Left ventricle myocardium superior (tissue), 1 donor: ENCODE measurements at regions of chr13 and their contacts with region 1.

Region 1: GRCh38 chr13:76383676-76384461 is 502.3 kb downstream of the KCTD12 start:
- DNase-seq: no peak
- ATAC-seq: peak; percentile 85

Region 2: GRCh38 chr13:76210262-76210661 is 173.6 kb before region 1 on chr13:
- intact Hi-C with region 1: loop called (anchors 5 kb)
- DNase-seq: peak; percentile 56
- ATAC-seq: peak; percentile 58

Region 3: DNA sequence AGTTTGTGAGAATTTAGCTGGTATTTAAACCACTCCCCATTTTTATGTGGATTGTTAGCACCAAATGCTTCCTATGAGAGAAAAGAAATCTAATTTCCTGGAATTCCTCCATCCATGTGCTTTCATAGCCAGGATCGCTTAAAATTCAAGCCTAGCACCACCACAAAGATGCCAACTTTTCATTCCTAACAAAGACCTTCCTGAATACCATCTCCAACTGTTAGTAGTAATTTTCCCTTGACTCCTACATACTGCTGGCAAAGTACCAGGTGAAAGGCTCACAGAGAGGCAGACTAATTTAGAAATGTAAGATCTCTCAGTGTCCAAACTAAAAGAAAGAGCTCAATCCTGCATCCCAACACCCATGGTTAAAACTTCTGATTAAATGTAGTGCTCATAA is 116.0 kb after region 1 on chr13:
- intact Hi-C with region 1: no loop called
- DNase-seq: no peak
- ATAC-seq: no peak

Region 4: DNA sequence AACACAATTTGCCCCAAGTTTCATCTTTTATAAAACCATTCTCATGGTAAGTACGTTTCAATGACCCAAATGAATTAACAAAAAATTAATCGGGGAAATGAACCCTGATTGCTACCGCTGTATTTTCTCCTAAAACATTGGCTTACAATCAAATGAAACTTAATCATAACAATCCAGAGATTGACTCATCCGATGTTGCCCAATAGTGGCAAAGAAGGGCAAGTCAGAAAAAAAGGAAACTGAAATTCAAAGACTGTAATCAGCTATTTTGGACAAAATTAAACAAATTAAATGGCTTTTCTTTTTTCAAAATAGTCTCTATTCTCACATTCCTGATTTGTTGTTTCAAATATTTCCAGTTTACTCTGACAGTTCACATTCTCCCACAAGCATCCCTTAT is 560.6 kb after region 1 on chr13:
- intact Hi-C with region 1: no loop called
- DNase-seq: no peak
- ATAC-seq: no peak